Activated CD4-positive, alpha-beta T cell treated with anti-CD3 and anti-CD28 coated beads for 36 hours (primary cell): ENCODE measurements at regions of chr10 and their contacts with region 1.

Region 1: DNA sequence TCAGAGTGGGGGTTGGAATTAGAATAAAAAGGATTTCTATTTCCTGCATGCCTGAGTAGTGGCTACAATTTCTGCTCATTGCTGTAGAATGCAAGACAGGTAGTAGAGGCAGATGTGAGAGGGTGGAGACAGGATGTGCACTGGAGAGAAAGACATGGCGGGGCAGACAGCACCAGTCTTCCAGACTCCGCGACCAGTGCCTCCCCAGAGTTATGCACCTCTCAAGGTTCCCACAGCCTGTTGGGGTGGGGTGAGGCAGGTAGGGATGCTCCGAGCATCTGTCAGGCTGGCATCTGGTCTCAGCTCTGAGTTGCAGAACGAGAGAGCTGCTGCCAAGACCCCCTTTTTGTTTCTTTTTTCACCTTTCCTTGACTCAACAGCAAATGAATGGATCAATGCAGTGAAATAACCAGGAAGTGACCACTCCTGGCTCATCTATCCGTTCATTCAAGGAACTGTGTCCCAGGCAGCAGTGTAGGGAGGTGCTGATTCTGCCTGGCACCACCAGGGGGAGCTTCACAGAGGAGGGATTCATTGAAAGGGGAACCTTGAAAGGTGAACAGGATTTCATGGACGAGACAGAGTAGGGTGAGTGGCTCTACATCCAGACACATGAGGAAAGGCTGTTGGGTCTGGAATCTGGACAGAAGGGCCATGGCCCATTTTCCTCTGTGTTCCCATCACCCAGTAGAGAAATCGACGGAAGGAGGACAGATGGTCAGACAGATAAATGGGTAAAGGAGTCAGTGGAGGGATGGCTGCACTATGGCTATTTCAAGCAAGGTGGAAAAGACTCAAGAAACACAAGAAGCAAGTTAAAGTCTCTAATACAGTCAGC is 17.2 kb upstream of the SLC18A3 start:
- DNase-seq: peak; percentile 74
- ATAC-seq: peak; percentile 58
- H3K4me3 Mint-ChIP-seq: no peak overlapping the region
- H3K27ac Mint-ChIP-seq: no peak overlapping the region
- H3K4me1 Mint-ChIP-seq: no peaks in the 10 kb centered on the region
- H3K27me3 Mint-ChIP-seq: peaks cover 9% of the 10 kb centered on the region

Region 2: GRCh38 chr10:50224330-50224952 is 631.5 kb after region 1 on chr10:
- CTCF ChIA-PET with region 1: no interaction called
- POLR2A ChIA-PET with region 1: no interaction called
- intact Hi-C with region 1: loop called (anchors 1 to 10 kb)
- DNase-seq: peak; percentile 46
- ATAC-seq: peak; percentile 90
- H3K4me3 Mint-ChIP-seq: no peak overlapping the region
- H3K27ac Mint-ChIP-seq: no peak overlapping the region
- H3K4me1 Mint-ChIP-seq: peaks cover 4% of the 10 kb centered on the region
- H3K27me3 Mint-ChIP-seq: peaks cover 26% of the 10 kb centered on the region

Region 3: DNA sequence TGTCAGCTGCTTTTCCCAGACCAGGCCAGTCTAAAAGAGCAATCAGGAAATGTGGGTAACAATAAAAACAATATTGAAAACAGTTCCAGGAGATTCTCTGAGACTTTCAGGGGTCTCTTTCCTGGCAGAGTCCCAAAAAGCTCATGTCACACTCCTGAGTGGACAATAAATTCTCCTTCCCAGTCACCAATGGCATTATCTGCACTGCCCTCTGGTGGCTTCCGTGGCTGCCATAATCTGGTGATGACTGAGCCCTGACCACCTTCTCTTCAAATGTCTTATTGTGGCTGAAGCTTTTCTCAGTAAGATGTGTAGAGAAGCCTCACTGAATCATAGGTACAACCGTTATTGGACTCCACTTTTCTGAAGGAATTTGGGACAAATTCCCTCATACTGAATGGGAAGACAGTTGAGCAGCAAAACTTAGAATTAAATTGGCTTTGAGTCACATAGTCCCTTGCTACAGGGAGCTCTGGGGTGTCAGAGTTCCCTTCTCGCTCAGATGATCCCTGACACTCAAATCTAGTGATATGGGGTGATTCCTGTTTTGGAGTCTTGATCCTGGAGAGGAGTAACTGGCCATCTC is 682.8 kb after region 1 on chr10:
- CTCF ChIA-PET with region 1: no interaction called
- POLR2A ChIA-PET with region 1: no interaction called
- intact Hi-C with region 1: loop called (anchors 5 kb)
- DNase-seq: peak; percentile 57
- ATAC-seq: no peak
- H3K4me3 Mint-ChIP-seq: no peak overlapping the region
- H3K27ac Mint-ChIP-seq: no peak overlapping the region
- H3K4me1 Mint-ChIP-seq: no peaks in the 10 kb centered on the region
- H3K27me3 Mint-ChIP-seq: peaks cover 27% of the 10 kb centered on the region